MCF 10A (cell line): ENCODE measurements at regions of chr14 and their contacts with region 1.

Region 1: DNA sequence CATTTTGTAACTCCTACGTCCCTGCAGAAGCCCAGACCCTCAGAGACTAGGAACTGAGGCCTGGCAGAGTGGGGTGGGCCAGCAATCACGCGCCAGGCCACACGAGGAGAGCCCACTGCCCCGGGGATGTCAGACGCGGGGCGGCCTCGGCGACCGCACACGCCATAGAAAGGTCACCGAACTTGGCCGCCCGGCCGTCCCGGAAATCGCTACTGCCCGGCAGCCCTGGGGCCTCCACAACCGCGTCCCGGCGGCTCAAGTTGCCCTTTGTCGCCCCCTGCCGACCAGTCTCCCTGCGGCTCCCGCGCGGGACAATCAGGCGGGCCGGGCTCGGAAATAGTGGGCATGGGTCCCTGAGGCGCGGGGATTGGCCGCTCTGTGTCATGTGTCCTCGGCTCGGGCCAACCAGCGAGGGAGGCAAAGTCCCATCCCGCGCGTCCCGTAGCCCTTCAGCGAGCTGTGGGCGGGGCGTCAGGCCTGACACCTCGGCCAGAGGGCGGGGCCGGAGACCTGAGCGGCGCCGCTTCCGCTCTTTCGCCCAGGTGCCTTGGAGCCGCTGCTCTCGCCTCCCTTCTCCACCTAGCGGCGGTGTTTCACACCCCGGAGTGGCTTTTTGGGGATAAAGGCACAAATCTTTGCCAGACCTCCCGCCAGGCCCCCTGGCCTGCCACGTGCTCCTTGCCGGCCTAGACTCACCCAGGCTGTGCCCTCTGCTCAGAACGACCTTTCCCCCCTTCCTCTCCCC is 33.4 kb upstream of the DEGS2 start:
- DNase-seq: peak; percentile 99
- H3K4me3 Mint-ChIP-seq: peak overlapping the region; percentile 70
- H3K27ac Mint-ChIP-seq: peak overlapping the region; percentile 89
- H3K4me1 Mint-ChIP-seq: peaks cover 11% of the 10 kb centered on the region
- H3K27me3 Mint-ChIP-seq: no peaks in the 10 kb centered on the region
- CTCF ChIP-seq: peak; percentile 71

Region 2: DNA sequence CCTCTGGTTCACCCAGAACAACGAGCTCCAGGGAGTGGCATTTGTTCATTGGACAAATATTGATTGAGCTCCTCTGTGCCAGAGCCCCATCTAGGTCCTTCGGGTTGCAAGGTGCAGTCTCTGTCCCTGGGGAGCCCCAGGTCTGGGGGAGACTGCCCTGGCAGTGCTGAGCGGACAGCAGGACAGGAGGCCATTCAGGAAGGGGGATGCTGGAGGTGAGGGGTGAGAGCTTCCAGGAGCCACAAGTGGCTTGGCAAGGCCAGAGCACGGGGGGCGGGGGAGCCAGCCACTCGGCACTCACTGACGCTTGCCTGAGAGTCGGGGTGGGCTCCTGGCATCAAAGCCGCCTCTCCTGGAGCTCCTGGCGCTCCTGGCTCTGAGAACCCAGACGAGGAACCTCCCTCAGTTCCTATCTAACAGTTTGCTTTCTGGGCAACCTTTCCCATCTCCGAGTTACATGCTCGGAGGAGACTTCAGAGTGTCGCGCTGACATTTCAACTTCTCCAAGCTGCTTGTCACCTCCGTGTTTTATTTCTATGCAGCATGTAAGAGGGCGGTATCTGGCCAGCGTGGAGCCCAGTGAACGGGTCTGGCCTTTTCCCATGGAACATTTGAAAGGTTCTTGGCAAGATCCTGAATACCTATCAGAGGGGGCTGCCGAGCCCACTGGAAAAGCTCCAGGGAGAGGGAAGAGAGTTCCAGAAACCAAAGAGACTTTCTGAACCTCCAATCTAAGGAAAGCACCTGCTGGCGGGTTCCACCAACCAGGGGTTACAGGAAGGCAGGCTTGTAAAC is 858.8 kb before region 1 on chr14:
- CTCF ChIA-PET with region 1: no interaction called
- POLR2A ChIA-PET with region 1: no interaction called
- intact Hi-C with region 1: no loop called
- DNase-seq: no peak
- H3K4me3 Mint-ChIP-seq: no peak overlapping the region
- H3K27ac Mint-ChIP-seq: no peak overlapping the region
- H3K4me1 Mint-ChIP-seq: no peaks in the 10 kb centered on the region
- H3K27me3 Mint-ChIP-seq: peaks cover 20% of the 10 kb centered on the region
- CTCF ChIP-seq: no peak

Region 3: GRCh38 chr14:99982537-99983250 is 210.2 kb before region 1 on chr14:
- CTCF ChIA-PET with region 1: interaction called, 28 read pairs
- POLR2A ChIA-PET with region 1: interaction called, 7 read pairs
- intact Hi-C with region 1: loop called (anchors 1 kb)
- DNase-seq: peak; percentile 74
- H3K4me3 Mint-ChIP-seq: no peak overlapping the region
- H3K27ac Mint-ChIP-seq: no peak overlapping the region
- H3K4me1 Mint-ChIP-seq: peaks cover 22% of the 10 kb centered on the region
- H3K27me3 Mint-ChIP-seq: no peaks in the 10 kb centered on the region
- CTCF ChIP-seq: peak; percentile 87

Region 4: DNA sequence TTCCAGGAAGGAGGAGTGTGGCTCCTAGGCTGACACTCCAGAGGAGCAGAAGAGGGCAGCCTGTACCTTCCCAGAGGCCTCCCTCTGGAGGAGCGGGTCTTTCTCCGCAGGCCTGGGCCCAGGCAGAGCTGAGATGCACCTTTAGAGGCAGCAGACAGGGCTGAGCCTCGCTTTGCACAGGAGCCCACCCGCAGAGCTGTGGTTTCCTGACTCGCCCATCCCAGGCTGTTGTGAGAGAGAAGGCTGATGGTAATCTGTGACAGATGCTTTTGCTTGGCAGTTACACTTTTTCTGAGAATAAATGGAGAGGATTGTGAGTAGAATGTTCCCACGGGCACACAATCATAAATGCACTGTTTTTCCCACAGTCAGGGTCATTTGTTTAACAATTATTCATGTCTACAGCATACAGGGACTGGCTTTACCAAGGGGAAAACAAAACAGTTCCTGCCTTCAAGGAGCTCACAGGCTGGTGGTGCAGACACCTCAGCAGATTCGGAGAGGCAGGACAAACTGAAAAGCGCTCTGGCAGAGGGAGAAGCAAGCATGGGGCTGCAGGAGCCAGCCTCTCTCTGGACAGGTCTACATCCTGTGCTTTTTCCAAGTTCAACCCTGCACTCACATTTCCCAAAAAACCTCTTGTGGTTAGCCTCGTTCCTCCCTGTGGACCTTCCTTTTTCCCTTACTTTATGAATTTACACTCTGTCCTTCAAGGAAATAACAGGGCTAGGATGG is 113.7 kb before region 1 on chr14:
- CTCF ChIA-PET with region 1: interaction called, 68 read pairs
- POLR2A ChIA-PET with region 1: interaction called, 3 read pairs
- intact Hi-C with region 1: loop called (anchors 1 kb)
- DNase-seq: peak; percentile 47
- H3K4me3 Mint-ChIP-seq: no peak overlapping the region
- H3K27ac Mint-ChIP-seq: no peak overlapping the region
- H3K4me1 Mint-ChIP-seq: peaks cover 31% of the 10 kb centered on the region
- H3K27me3 Mint-ChIP-seq: no peaks in the 10 kb centered on the region
- CTCF ChIP-seq: no peak

Region 5: GRCh38 chr14:100203949-100204834 is 11.3 kb after region 1 on chr14:
- CTCF ChIA-PET with region 1: interaction called, 33 read pairs
- POLR2A ChIA-PET with region 1: interaction called, 27 read pairs
- intact Hi-C with region 1: no loop called
- DNase-seq: peak; percentile 87
- H3K4me3 Mint-ChIP-seq: no peak overlapping the region
- H3K27ac Mint-ChIP-seq: peak overlapping the region; percentile 70
- H3K4me1 Mint-ChIP-seq: no peaks in the 10 kb centered on the region
- H3K27me3 Mint-ChIP-seq: no peaks in the 10 kb centered on the region
- CTCF ChIP-seq: no peak

Region 6: DNA sequence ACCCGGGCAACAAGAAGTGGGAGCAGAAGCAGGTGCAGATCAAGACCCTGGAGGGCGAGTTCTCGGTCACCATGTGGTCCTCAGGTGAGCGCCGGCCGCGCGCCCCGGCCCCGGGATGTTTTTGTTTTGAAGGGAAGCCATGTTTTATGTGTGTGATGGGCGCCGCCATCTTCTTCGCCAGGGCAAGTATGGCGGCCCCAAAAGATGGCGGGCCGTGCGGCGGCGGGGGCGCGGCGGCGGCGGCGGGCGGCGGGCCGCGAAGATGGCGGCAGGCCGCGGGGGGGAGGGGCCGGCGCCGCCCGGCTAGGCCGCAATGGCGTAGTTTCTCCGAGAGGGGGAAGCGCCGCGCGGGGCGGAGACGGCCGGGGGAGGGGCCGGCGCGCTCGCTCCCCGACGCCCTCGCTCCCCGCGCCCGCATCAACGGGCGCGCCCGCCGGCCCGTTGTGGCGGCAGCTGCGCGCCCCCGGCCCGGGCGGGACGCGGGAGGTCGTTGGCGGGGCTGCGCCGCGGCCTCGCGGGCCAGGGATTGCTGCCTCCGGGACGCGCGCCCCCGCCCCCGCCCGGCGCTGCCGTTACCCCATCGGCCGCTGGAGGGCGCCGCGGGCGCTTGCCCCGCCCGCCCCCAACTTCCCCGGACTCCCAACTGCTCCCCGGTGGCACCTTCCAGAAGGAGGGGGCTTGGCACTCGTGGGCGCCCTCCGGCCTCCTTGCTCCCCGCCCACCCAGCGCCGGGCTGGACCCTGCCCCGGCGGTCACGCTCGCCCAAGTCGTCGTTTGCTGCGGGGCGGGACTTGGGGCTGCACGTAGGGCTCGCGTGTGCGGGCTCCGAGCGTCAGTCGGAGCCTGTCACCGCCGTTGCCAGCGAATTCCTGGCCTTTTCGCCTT is 47.2 kb after region 1 on chr14:
- CTCF ChIA-PET with region 1: interaction called, 11 read pairs
- POLR2A ChIA-PET with region 1: interaction called, 31 read pairs
- intact Hi-C with region 1: loop called (anchors 2 kb)
- DNase-seq: peak; percentile 82
- H3K4me3 Mint-ChIP-seq: peak overlapping the region; percentile 81
- H3K27ac Mint-ChIP-seq: peak overlapping the region; percentile 87
- H3K4me1 Mint-ChIP-seq: peaks cover 23% of the 10 kb centered on the region
- H3K27me3 Mint-ChIP-seq: no peaks in the 10 kb centered on the region
- CTCF ChIP-seq: peak; percentile 60

Region 7: GRCh38 chr14:100406505-100407131 is 213.8 kb after region 1 on chr14:
- CTCF ChIA-PET with region 1: no interaction called
- POLR2A ChIA-PET with region 1: no interaction called
- intact Hi-C with region 1: no loop called
- DNase-seq: peak; percentile 81
- H3K4me3 Mint-ChIP-seq: no peak overlapping the region
- H3K27ac Mint-ChIP-seq: peak overlapping the region; percentile 79
- H3K4me1 Mint-ChIP-seq: peaks cover 40% of the 10 kb centered on the region
- H3K27me3 Mint-ChIP-seq: no peaks in the 10 kb centered on the region
- CTCF ChIP-seq: no peak

Region 8: DNA sequence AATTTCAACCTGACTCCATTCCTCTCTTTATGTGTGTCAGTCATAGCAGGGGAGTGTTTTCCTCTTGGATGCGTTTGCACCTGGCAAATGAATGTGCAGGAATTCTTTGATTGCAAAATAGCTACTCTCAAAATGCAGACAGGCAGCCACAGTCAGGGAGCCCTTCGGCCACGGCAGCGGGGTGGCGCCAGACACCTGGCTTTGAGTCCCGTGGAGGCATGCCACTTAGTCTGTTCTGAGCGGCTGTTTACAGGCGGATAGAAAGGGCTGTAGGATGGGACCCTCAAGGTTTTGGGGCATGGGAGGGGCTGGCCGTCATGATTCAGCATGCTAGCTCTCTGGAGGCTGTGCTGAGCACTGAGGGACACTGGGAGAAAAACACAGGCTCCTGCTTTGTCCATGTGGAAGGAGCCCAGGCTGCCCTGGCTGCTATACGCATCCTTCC is 247.4 kb after region 1 on chr14:
- CTCF ChIA-PET with region 1: no interaction called
- POLR2A ChIA-PET with region 1: no interaction called
- intact Hi-C with region 1: no loop called
- DNase-seq: peak; percentile 89
- H3K4me3 Mint-ChIP-seq: peak overlapping the region; percentile 48
- H3K27ac Mint-ChIP-seq: peak overlapping the region; percentile 87
- H3K4me1 Mint-ChIP-seq: peaks cover 23% of the 10 kb centered on the region
- H3K27me3 Mint-ChIP-seq: no peaks in the 10 kb centered on the region
- CTCF ChIP-seq: peak; percentile 85